Endothelial cell of umbilical vein (primary cell): ENCODE measurements at regions of chr14 and their contacts with region 1.

Region 1: DNA sequence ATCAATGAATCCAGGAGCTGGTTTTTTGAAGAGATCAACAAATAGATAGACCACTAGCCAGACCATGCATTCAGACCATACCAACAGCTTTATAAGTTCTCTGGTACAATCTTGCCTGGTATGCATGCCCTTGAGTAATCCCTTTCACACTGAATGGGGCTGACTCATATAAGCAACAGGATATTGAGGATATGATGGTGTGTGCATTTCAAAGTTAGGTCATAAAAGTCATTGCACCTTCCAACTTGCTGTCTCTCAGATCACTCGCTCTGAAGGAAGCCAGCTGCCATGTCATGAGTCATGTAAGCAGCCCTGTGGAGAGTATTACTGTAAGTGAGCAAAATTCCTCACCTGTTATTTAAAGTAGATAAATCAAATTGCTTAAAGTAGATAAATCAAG is 45.0 kb upstream of the OR6J1 start:
- DNase-seq: peak; percentile 96
- H3K4me3 ChIP-seq: no peak overlapping the region
- H3K27ac ChIP-seq: peak overlapping the region; percentile 91
- H3K4me1 ChIP-seq: peaks cover 32% of the 10 kb centered on the region
- H3K27me3 ChIP-seq: no peaks in the 10 kb centered on the region
- CTCF ChIP-seq: no peak
- POLR2A ChIP-seq: peak; percentile 40

Region 2: GRCh38 chr14:22699801-22700564 is 10.8 kb after region 1 on chr14:
- CTCF ChIA-PET with region 1: interaction called, 6 read pairs
- POLR2A ChIA-PET with region 1: interaction called, 4 read pairs
- dilution Hi-C with region 1: no loop called
- intact Hi-C with region 1: loop called (anchors 1 kb)
- DNase-seq: peak; percentile 80
- H3K4me3 ChIP-seq: no peak overlapping the region
- H3K27ac ChIP-seq: peak overlapping the region; percentile 57
- H3K4me1 ChIP-seq: peaks cover 23% of the 10 kb centered on the region
- H3K27me3 ChIP-seq: no peaks in the 10 kb centered on the region
- CTCF ChIP-seq: no peak
- POLR2A ChIP-seq: peak; percentile 62

Region 3: DNA sequence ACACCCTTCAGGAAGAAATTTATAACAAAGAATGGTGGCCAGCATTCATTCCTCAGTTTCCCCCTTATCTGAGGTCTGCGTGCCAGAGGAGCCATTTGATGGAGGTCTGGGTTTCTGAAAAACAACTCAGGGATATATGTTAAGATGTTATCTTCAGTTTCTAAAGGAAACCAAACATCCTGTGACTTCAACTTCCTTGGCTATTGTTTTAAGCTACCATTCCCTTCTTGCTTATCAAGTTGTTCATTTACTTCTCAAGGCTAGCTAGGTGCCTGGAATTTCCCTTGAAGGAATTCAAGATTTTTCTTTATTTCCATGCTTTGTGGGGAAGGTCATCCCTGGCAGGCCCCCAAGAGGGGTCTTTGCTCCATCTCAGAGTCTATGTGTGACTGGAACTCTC is 50.2 kb after region 1 on chr14:
- CTCF ChIA-PET with region 1: interaction called, 4 read pairs
- POLR2A ChIA-PET with region 1: interaction called, 3 read pairs
- dilution Hi-C with region 1: no loop called
- intact Hi-C with region 1: loop called (anchors 1 kb)
- DNase-seq: peak; percentile 88
- H3K4me3 ChIP-seq: no peak overlapping the region
- H3K27ac ChIP-seq: peak overlapping the region; percentile 97
- H3K4me1 ChIP-seq: peaks cover 30% of the 10 kb centered on the region
- H3K27me3 ChIP-seq: no peaks in the 10 kb centered on the region
- CTCF ChIP-seq: no peak
- POLR2A ChIP-seq: no peak